Colonic mucosa (tissue), 4 donors: ENCODE measurements at regions of chr15 and their contacts with region 1.

Region 1: GRCh38 chr15:55108858-55109518 is 87.8 kb downstream of the RSL24D1 start:
- DNase-seq: peak; percentile 54
- H3K4me3 ChIP-seq: no peak overlapping the region
- H3K27ac ChIP-seq: no peak overlapping the region
- H3K4me1 ChIP-seq: no peaks in the 10 kb centered on the region
- H3K27me3 ChIP-seq: no peaks in the 10 kb centered on the region
- CTCF ChIP-seq: peak; percentile 44

Region 2: DNA sequence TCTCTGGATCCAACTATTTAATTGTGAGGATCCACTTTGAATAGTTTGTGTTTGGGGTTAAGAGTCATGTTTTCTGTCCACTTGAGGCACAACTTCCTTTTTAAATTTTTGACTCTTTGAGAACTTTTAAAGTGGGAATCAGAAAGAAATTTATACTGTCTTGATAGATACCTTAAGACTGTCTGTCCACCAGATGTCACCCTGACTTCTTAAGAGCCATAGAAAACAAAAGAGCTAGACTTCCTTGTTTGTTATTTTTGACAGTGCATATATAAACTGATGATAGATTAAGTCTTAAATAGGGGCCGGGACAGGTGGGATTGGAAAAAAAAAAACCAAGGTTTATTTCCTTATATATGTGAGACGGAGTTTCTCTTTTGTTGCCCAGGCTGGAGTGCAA is 1297.5 kb before region 1 on chr15:
- intact Hi-C with region 1: loop called (anchors 5 kb)
- DNase-seq: no peak
- H3K4me3 ChIP-seq: no peak overlapping the region
- H3K27ac ChIP-seq: no peak overlapping the region
- H3K4me1 ChIP-seq: no peaks in the 10 kb centered on the region
- H3K27me3 ChIP-seq: no peaks in the 10 kb centered on the region
- CTCF ChIP-seq: peak; percentile 36

Region 3: GRCh38 chr15:53976844-53977392 is 1132.1 kb before region 1 on chr15:
- intact Hi-C with region 1: loop called (anchors 10 kb)
- DNase-seq: no peak
- H3K4me3 ChIP-seq: no peak overlapping the region
- H3K27ac ChIP-seq: no peak overlapping the region
- H3K4me1 ChIP-seq: no peaks in the 10 kb centered on the region
- H3K27me3 ChIP-seq: no peaks in the 10 kb centered on the region
- CTCF ChIP-seq: no peak

Region 4: DNA sequence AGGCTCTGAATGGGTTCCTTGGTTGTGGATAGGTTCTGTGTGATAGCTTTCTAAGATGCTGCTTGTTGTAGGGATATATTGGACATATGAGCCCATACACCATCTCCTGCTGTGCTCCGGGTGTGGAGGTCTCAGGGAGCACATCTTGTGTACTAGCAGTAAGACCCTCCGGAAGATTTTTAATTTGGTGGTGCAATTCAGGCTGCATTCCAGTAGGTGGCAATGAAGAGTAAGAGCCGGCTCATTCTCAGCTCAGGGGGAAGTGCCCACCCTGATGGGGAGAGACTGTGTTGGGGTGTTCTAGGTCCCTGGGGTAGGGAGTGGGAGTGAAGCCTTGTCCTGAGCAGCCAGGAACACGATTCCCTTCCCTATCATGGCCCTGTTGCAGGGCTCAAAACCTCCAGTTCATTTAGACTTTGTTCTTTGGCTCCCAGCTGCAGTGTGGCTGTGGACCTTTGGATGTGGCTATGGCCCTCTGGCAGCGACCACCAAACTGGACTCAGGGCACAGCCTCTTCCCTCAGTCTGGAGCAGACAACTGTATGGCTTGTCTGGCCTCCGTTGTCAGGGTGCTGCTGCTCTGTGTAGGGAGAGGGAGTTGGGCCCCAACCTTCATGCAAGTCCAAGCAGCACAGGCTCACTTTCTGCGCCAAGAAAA is 1026.0 kb before region 1 on chr15:
- intact Hi-C with region 1: loop called (anchors 5 kb)
- DNase-seq: no peak
- H3K4me3 ChIP-seq: no peak overlapping the region
- H3K27ac ChIP-seq: no peak overlapping the region
- H3K4me1 ChIP-seq: no peaks in the 10 kb centered on the region
- H3K27me3 ChIP-seq: no peaks in the 10 kb centered on the region
- CTCF ChIP-seq: peak; percentile 46

Region 5: DNA sequence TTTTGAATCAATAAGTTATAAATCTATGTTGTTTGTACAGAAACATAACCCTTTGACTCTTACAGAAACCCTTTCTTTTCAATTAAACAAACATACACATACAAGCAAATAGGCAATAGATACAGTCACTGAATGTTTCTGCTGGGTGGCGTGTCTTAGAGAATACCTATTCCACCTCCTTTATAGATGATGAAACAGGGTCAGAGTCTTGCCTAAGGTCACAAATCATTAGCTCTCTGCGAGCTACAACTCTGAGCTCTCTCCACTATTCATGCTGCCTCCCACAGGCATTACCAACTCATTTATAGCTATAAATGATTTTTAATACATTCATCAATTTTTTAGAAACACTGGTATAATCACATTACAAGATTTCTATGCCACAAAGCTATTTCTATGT is 64.8 kb before region 1 on chr15:
- intact Hi-C with region 1: no loop called
- DNase-seq: no peak
- H3K4me3 ChIP-seq: no peak overlapping the region
- H3K27ac ChIP-seq: no peak overlapping the region
- H3K4me1 ChIP-seq: no peaks in the 10 kb centered on the region
- H3K27me3 ChIP-seq: no peaks in the 10 kb centered on the region
- CTCF ChIP-seq: no peak